IMR-90 (cell line): ENCODE measurements at regions of chr7 and their contacts with region 1.

Region 1: GRCh38 chr7:30504347-30505173 is at the start of gene GGCT:
- DNase-seq: peak; percentile 98
- ATAC-seq: peak; percentile 98
- H3K4me3 ChIP-seq: peak within 1 kb of the TSS; percentile 80
- H3K27ac ChIP-seq: peak within 1 kb of the TSS; percentile 63
- H3K4me1 ChIP-seq: peaks cover 7% of the 10 kb centered on the region; the same call in 1 of the 2 replicates
- H3K27me3 ChIP-seq: no peaks in the 10 kb centered on the region
- CTCF ChIP-seq: no peak
- POLR2A ChIP-seq: peak; percentile 86
- RAD21 ChIP-seq: 0 out of 2 replicates have a peak, but pooled peaks have one; percentile 10
- total RNA-seq, gene GGCT: 12.0 and 17.5 TPM in 2 replicates

Region 2: GRCh38 chr7:30038182-30038980 is 466.2 kb before region 1 on chr7:
- CTCF ChIA-PET with region 1: no interaction called
- POLR2A ChIA-PET with region 1: no interaction called
- dilution Hi-C with region 1: no loop called
- in situ Hi-C with region 1: no loop called
- intact Hi-C with region 1: no loop called
- DNase-seq: peak; percentile 48
- ATAC-seq: peak; percentile 92
- H3K4me3 ChIP-seq: no peak overlapping the region
- H3K27ac ChIP-seq: peak overlapping the region; percentile 22; the same call in 1 of the 2 replicates
- H3K4me1 ChIP-seq: peaks cover 6% of the 10 kb centered on the region; the same call in 1 of the 2 replicates
- H3K27me3 ChIP-seq: no peaks in the 10 kb centered on the region
- CTCF ChIP-seq: no peak
- POLR2A ChIP-seq: no peak
- RAD21 ChIP-seq: no peak

Region 3: DNA sequence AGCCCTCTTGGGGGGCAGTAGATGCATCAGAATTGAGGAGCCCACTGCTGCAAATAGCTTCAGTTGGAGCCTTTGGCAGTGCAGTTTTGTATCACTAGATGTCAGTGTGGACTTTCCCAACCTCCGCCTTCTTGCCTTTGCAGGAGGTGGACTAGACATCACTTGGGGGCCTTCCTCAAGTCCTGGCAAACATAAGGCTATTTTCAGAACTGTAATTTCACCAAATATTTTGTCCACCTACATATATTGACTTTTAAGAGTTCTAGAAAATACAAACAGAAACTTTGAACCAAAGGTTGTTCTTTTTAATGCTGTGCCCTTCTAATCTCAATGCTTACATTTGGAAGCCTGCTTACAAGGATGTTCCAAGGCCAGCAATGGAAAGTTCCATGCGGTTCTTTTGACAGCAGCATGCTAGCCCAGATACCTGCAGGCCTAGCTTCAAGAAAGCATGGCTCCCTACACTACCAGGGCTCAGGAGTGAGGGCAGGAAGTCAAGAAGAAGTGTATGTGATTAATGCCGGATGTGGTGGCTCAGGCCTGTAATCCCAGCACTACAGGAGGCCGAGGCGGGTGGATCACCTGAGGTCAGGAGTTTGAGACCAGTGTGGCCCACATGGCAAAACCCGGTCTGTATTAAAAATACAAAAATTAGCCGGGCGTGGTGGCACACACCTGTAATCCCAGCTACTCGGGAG is 228.2 kb before region 1 on chr7:
- CTCF ChIA-PET with region 1: no interaction called
- POLR2A ChIA-PET with region 1: no interaction called
- dilution Hi-C with region 1: no loop called
- in situ Hi-C with region 1: no loop called
- intact Hi-C with region 1: loop called (anchors 10 kb)
- DNase-seq: peak; percentile 62
- ATAC-seq: peak; percentile 94
- H3K4me3 ChIP-seq: no peak overlapping the region
- H3K27ac ChIP-seq: no peak overlapping the region
- H3K4me1 ChIP-seq: no peaks in the 10 kb centered on the region
- H3K27me3 ChIP-seq: peaks cover 23% of the 10 kb centered on the region
- CTCF ChIP-seq: peak; percentile 76
- POLR2A ChIP-seq: no peak
- RAD21 ChIP-seq: peak; percentile 86

Region 4: DNA sequence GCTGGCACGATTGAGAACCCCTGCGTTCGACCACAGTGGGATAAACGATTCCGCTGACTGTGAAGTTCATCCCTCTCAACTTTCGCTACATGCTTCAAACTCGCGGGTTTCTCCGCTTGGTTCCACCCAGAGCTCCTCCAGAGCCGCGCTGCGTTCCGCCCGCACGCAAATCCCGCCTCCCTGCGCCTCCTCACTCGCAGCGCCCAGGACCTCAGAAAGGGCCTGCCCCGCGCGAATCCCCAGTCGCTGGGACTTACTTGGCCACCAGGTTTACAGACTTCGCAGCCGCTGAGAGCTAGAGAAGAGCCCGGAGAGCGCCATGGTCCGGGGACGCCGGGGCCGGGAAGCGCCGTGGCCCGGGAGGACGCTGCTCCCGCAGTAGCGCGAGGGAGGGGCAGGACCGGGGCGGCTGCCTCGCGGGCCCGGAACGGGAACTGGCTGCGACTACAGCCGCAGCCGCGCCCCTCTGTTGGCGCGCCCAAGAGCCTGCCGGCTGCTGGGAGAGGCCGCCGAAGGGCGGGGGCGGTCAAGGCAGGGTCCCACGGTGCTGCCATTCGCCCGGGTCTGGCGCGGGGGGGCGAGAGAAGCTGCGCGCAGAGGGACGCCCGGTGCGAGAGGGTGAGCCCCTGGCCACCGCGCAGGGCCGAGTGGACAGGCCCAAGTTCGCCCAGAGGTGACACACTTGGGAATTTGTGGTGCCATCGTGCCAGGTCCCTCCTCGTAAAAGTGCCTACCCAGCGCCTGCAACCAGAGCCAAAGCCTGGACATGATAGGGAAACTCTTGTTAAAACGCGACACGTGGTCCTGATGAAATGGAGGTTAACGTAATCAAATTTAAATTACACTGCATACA is 26.0 kb before region 1 on chr7 and contains the start of gene NOD1:
- CTCF ChIA-PET with region 1: no interaction called
- POLR2A ChIA-PET with region 1: no interaction called
- dilution Hi-C with region 1: no loop called
- in situ Hi-C with region 1: no loop called
- intact Hi-C with region 1: loop called (anchors 2 kb)
- DNase-seq: peak; percentile 63
- ATAC-seq: peak; percentile 96
- H3K4me3 ChIP-seq: peak within 1 kb of the TSS; percentile 83
- H3K27ac ChIP-seq: peak within 1 kb of the TSS; percentile 88
- H3K4me1 ChIP-seq: peaks cover 7% of the 10 kb centered on the region
- H3K27me3 ChIP-seq: no peaks in the 10 kb centered on the region
- CTCF ChIP-seq: no peak
- POLR2A ChIP-seq: peak; percentile 77
- RAD21 ChIP-seq: no peak
- total RNA-seq, gene NOD1: 1.4 and 1.8 TPM in 2 replicates